CD4-positive, alpha-beta T cell (primary cell): ENCODE measurements at regions of chr14 and their contacts with region 1.

Region 1: DNA sequence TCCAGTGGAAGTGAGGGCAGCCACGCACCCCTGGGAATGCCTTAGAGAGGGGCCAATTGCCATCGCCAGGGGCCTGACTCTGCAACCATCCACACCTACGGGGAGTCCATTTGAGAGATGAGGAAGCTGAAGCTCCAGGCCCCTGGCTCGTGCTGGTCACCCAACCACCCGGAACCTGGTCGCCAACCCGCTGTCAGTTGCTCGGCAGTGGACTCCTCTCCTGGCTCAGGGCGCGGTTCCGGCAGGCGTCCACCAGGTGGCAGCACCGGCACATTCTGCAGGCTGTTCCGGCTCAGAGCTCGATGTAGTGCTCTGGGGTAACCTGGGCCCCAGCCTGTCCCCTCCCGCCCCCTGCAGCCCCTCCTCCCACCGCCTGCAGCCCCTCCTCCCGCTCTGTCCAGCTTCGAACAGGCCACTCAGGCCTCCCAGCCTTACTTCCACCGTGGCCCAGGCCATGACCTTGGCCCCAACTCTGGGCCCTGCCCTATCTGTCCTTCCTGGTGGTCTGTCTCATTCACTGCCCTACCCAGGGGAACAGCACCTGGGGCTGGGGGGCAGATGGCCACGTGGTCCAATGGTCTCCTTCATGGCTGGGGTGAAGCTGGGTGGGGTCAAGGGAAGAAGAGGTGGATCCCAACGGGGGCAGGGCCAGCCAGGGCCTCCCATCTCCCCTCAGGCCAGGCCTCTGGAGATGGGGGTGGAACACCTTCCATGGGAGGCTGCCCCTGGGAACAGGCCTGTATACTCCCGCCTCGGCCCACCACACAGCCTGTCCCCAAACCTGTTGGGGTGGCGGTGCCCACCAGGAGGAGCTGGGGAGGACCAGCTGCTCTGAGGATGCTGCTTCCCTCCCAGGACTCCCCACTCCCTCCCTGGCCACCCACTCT is 15.7 kb downstream of the SIVA1 start:
- DNase-seq: peak; percentile 81 to 97 (median 91)
- ATAC-seq: peak; percentile 98
- H3K4me3 ChIP-seq: no peak overlapping the region
- H3K4me3 Mint-ChIP-seq: no peak overlapping the region
- H3K27ac ChIP-seq: no peak overlapping the region
- H3K27ac Mint-ChIP-seq: no peak overlapping the region
- H3K4me1 ChIP-seq: peaks cover 9% of the 10 kb centered on the region
- H3K4me1 Mint-ChIP-seq: no peaks in the 10 kb centered on the region
- H3K27me3 ChIP-seq: no peaks in the 10 kb centered on the region
- H3K27me3 Mint-ChIP-seq: no peaks in the 10 kb centered on the region
- CTCF ChIP-seq: peak; percentile 94

Region 2: GRCh38 chr14:103782376-103782775 is 986.3 kb before region 1 on chr14:
- CTCF ChIA-PET with region 1: no interaction called
- POLR2A ChIA-PET with region 1: no interaction called
- intact Hi-C with region 1: no loop called
- DNase-seq: no peak
- ATAC-seq: no peak
- H3K4me3 ChIP-seq: no peak overlapping the region
- H3K4me3 Mint-ChIP-seq: no peak overlapping the region
- H3K27ac ChIP-seq: no peak overlapping the region
- H3K27ac Mint-ChIP-seq: no peak overlapping the region
- H3K4me1 ChIP-seq: no peaks in the 10 kb centered on the region
- H3K4me1 Mint-ChIP-seq: no peaks in the 10 kb centered on the region
- H3K27me3 ChIP-seq: no peaks in the 10 kb centered on the region
- H3K27me3 Mint-ChIP-seq: no peaks in the 10 kb centered on the region
- CTCF ChIP-seq: no peak

Region 3: DNA sequence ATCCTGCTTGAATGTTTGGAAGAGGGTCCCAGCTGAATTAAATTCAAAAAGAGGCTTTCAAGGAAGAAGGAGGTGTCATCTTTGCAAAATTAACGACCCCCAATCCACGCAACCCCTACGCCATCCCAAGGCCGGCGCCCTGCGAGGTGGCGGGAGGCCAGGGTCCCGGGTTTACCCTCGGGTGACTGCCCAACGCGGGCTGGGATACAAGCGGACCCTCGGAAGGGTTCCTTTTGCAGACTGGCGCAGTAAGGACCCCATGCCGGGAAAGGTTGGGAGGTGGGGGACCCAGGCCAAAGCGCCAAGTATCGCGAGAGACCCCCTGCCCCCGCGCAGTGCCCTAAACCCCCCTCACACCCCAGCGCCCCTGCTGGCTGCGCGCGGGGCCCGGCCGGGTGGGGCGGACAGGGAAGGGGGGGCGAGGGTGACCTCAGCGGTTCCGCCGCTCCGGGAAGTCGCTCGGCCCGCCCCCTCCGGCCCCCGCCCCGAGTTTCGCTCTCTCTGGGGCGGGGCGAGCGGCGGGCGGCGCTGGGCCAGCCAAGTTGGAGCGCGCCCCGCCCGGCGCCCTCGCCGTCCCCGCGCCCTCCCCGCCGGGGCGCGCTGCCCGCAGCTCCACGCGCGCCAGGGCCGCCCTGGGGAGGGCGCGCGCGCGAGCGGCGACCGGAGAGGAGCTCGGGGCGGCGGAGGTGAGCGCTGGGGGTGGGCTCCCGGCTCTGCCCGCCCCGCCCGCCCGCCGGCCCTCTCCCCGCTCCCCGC is 31.5 kb after region 1 on chr14:
- CTCF ChIA-PET with region 1: interaction called, 16 read pairs
- POLR2A ChIA-PET with region 1: interaction called, 4 read pairs
- intact Hi-C with region 1: loop called in 1 of 2 experiments (anchors 2 kb)
- DNase-seq: peak; percentile 59 to 94 (median 84)
- ATAC-seq: peak; percentile 63
- H3K4me3 ChIP-seq: peak overlapping the region; percentile 55
- H3K4me3 Mint-ChIP-seq: peak overlapping the region; percentile 79
- H3K27ac ChIP-seq: peak overlapping the region; percentile 50 to 82
- H3K27ac Mint-ChIP-seq: peak overlapping the region; percentile 71
- H3K4me1 ChIP-seq: peaks cover 55% of the 10 kb centered on the region
- H3K4me1 Mint-ChIP-seq: peaks cover 36% of the 10 kb centered on the region
- H3K27me3 ChIP-seq: no peaks in the 10 kb centered on the region
- H3K27me3 Mint-ChIP-seq: no peaks in the 10 kb centered on the region
- CTCF ChIP-seq: peak; percentile 10

Region 4: DNA sequence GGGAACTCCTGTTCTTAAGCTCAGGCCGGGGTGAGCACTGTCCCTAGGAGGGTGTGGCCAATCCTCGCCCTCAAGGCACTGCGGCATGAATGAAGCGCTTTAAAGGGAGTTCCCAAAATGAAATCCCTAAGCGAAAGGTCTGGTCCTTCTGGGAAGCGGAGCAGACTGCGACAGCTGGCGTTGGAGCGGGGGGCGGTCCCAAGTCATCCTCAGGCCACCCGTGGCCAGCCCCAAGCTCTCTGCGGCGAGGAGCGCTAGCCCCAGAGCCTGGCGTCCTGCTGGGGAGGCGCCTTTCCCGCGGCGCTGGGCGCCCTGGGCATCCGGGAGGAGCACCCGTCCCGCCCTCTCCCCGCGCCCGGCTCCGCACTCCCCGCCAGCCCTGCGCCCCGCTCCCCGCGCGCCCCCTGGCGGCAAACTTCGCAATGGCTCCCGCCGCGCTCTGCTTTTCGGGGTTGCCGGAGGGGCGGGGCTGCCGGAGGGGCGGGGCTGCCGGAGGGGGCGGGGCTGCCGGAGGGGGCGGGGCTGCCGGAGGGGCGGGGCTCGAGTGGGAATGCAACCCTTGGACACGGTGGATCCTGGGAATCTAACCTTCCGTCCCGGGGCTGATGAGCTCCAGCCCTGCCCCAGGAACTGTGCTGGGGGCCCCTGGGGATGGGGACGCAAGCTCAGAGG is 57.6 kb after region 1 on chr14:
- CTCF ChIA-PET with region 1: interaction called, 49 read pairs
- POLR2A ChIA-PET with region 1: interaction called, 18 read pairs
- intact Hi-C with region 1: loop called (anchors 1 kb)
- DNase-seq: peak; percentile 87 to 99 (median 94)
- ATAC-seq: peak; percentile 91
- H3K4me3 ChIP-seq: peak overlapping the region; percentile 74
- H3K4me3 Mint-ChIP-seq: peak overlapping the region; percentile 91
- H3K27ac ChIP-seq: no peak overlapping the region
- H3K27ac Mint-ChIP-seq: no peak overlapping the region
- H3K4me1 ChIP-seq: peaks cover 23% of the 10 kb centered on the region
- H3K4me1 Mint-ChIP-seq: peaks cover 29% of the 10 kb centered on the region
- H3K27me3 ChIP-seq: no peaks in the 10 kb centered on the region
- H3K27me3 Mint-ChIP-seq: peaks cover 10% of the 10 kb centered on the region
- CTCF ChIP-seq: peak; percentile 74

Region 5: GRCh38 chr14:104865644-104866441 is 97.2 kb after region 1 on chr14:
- CTCF ChIA-PET with region 1: no interaction called
- POLR2A ChIA-PET with region 1: interaction called, 3 read pairs
- intact Hi-C with region 1: loop called in 1 of 2 experiments (anchors 1 kb)
- DNase-seq: peak in 5 of 14 experiments; percentile 18 to 52 (median 45)
- ATAC-seq: peak; percentile 43
- H3K4me3 ChIP-seq: peak overlapping the region; percentile 34
- H3K4me3 Mint-ChIP-seq: peak overlapping the region; percentile 81
- H3K27ac ChIP-seq: no peak overlapping the region
- H3K27ac Mint-ChIP-seq: no peak overlapping the region
- H3K4me1 ChIP-seq: peaks cover 22% of the 10 kb centered on the region
- H3K4me1 Mint-ChIP-seq: peaks cover 6% of the 10 kb centered on the region
- H3K27me3 ChIP-seq: peaks cover 12 to 17% of the 10 kb centered on the region in 2 experiments
- H3K27me3 Mint-ChIP-seq: peaks cover 12% of the 10 kb centered on the region
- CTCF ChIP-seq: no peak

Region 6: GRCh38 chr14:104932676-104933631 is 164.3 kb after region 1 on chr14:
- CTCF ChIA-PET with region 1: no interaction called
- POLR2A ChIA-PET with region 1: no interaction called
- intact Hi-C with region 1: loop called in 1 of 2 experiments (anchors 5 kb)
- DNase-seq: peak; percentile 70 to 91 (median 81)
- ATAC-seq: peak; percentile 97
- H3K4me3 ChIP-seq: peak overlapping the region; percentile 45
- H3K4me3 Mint-ChIP-seq: peak overlapping the region; percentile 77
- H3K27ac ChIP-seq: no peak overlapping the region
- H3K27ac Mint-ChIP-seq: no peak overlapping the region
- H3K4me1 ChIP-seq: peaks cover 10% of the 10 kb centered on the region
- H3K4me1 Mint-ChIP-seq: peaks cover 5% of the 10 kb centered on the region
- H3K27me3 ChIP-seq: no peaks in the 10 kb centered on the region
- H3K27me3 Mint-ChIP-seq: peaks cover 15% of the 10 kb centered on the region
- CTCF ChIP-seq: peak; percentile 66